Gastrocnemius medialis (tissue), 4 donors: ENCODE measurements at regions of chr11 and their contacts with region 1.

Region 1: GRCh38 chr11:120108154-120108865 is 29.6 kb downstream of the TRIM29 start:
- DNase-seq: peak; percentile 31 to 37
- ATAC-seq: peak; percentile 66 to 78
- H3K4me3 ChIP-seq: no peak overlapping the region
- H3K27ac ChIP-seq: no peak overlapping the region
- H3K4me1 ChIP-seq: no peaks in the 10 kb centered on the region
- H3K27me3 ChIP-seq: no peaks in the 10 kb centered on the region
- CTCF ChIP-seq: peak; percentile 87 to 98 (median 94)
- POLR2A ChIP-seq: no peak

Region 2: GRCh38 chr11:119728651-119729580 is 379.4 kb before region 1 on chr11 and contains the start of gene NECTIN1:
- in situ Hi-C with region 1: loop called in 1 of 4 experiments (anchors 10 kb)
- intact Hi-C with region 1: no loop called
- DNase-seq: peak; percentile 67 to 68
- ATAC-seq: peak; percentile 95 to 97
- H3K4me3 ChIP-seq: peak within 1 kb of the TSS; percentile 57 to 99 (median 79)
- H3K27ac ChIP-seq: peak within 1 kb of the TSS; percentile 52 to 79 (median 74)
- H3K4me1 ChIP-seq: peaks cover 3 to 18% of the 10 kb centered on the region in 2 donors
- H3K27me3 ChIP-seq: peaks cover 13 to 15% (median 14%) of the 10 kb centered on the region in 3 donors
- CTCF ChIP-seq: peak; percentile 68 to 98 (median 88)
- POLR2A ChIP-seq: peak; percentile 59 to 81
- total RNA-seq, gene NECTIN1: 0.66 to 2.2 (median 0.92) TPM